ENCODE measurements at regions of chr7 and their contacts with region 1.

Region 1: DNA sequence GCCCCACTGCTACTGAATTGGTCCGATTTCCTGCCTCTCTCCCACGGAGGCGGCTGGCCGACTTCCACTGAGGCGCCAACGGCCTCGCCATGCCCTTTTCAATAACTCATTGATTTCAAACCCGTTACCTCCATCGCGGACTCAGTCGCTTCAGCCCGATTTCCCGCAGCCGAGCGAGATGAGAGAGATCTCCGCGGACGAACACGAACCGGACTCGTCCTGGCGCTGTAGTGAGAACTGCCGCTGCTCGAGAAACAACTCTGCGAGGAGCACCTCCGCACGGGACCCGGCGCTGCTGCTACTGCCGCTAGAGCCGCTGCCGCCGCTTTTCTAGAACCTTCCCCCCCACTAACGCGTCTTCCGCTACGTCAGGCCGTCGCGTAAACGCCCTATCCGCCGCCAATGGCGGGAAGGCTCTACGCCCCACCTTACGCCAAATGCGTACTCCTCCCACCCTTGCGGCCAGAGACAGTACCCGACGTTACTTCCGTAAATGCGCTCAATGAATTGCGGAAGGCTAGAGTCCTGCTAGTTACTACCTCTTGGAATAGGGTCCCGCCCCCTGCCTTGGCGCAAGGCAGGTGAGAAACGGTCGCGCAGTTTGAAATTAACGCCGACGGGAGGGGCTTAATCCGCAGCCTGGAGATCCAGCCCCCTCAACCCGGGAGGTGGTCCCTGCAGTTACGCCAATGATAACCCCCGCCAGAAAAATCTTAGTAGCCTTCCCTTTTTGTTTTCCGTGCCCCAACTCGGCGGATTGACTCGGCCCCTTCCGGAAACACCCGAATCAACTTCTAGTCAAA is at the start of gene HNRNPA2B1:
- DNase-seq: peak; percentile 97
- ATAC-seq: peak; percentile 71
- H3K4me3 Mint-ChIP-seq: peak within 1 kb of the TSS; percentile 100
- H3K27ac Mint-ChIP-seq: peak within 1 kb of the TSS; percentile 100
- H3K4me1 Mint-ChIP-seq: peaks cover 36% of the 10 kb centered on the region
- H3K27me3 Mint-ChIP-seq: no peaks in the 10 kb centered on the region
- total RNA-seq, gene HNRNPA2B1: 600 to 996 TPM

Region 2: DNA sequence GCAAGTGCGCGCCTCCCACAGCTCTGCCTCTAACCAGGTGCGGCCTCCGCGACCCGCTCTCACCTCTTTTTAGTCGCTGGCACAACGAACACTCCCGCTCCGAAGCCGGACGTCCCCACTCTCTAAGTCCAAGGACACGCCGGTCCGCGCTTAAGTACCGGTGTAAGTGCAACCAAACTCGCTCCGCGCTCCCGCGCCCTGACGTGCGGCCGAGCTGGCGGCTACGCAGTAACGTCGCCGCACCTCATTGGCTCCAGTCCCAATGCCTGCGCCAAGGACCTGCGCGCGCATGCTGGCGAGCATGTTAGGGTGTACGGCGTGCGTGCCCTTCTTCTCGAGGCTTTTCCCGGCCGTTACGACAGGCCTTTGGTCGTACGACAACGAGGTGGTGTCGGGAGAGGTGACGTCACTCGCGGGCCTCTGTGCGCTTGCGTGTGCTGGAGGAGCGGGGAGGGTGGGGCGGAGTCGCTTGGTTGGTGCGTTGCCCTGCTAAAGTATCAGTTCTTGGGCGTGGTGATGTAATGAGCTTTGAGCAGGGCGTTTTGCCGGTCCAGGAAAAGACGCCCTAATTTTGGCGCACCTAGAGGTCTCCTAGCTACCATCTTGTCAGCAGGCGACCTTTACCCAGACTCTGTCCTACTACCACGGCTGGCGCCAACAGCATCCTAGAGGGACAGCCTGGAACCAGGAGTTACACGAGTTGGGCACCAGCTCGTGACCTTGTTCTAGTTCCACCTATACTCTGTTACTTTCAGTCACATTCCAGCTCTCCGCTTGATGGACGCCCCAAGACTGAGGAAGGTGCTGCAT is 1075.3 kb before region 1 on chr7 and contains the start of gene CYCS:
- CTCF ChIA-PET with region 1: no interaction called
- POLR2A ChIA-PET with region 1: no interaction called
- intact Hi-C with region 1: loop called in 1 of 2 experiments (anchors 2 kb)
- DNase-seq: peak; percentile 100
- ATAC-seq: peak; percentile 97
- H3K4me3 Mint-ChIP-seq: peak within 1 kb of the TSS; percentile 97
- H3K27ac Mint-ChIP-seq: peak within 1 kb of the TSS; percentile 98
- H3K4me1 Mint-ChIP-seq: peaks cover 27% of the 10 kb centered on the region
- H3K27me3 Mint-ChIP-seq: no peaks in the 10 kb centered on the region
- total RNA-seq, gene CYCS: 222 to 237 TPM

Region 3: GRCh38 chr7:25557379-25557917 is 643.2 kb before region 1 on chr7:
- CTCF ChIA-PET with region 1: no interaction called
- POLR2A ChIA-PET with region 1: no interaction called
- intact Hi-C with region 1: no loop called
- DNase-seq: no peak
- ATAC-seq: no peak
- H3K4me3 Mint-ChIP-seq: no peak overlapping the region
- H3K27ac Mint-ChIP-seq: no peak overlapping the region
- H3K4me1 Mint-ChIP-seq: peaks cover 7% of the 10 kb centered on the region
- H3K27me3 Mint-ChIP-seq: peaks cover 5% of the 10 kb centered on the region

Region 4: GRCh38 chr7:25968205-25968993 is 232.2 kb before region 1 on chr7:
- CTCF ChIA-PET with region 1: no interaction called
- POLR2A ChIA-PET with region 1: interaction called, 5 read pairs
- intact Hi-C with region 1: loop called in 1 of 2 experiments (anchors 1 kb)
- DNase-seq: peak; percentile 75
- ATAC-seq: peak; percentile 86
- H3K4me3 Mint-ChIP-seq: no peak overlapping the region
- H3K27ac Mint-ChIP-seq: peak overlapping the region; percentile 35
- H3K4me1 Mint-ChIP-seq: peaks cover 18% of the 10 kb centered on the region
- H3K27me3 Mint-ChIP-seq: peaks cover 22% of the 10 kb centered on the region

Region 5: DNA sequence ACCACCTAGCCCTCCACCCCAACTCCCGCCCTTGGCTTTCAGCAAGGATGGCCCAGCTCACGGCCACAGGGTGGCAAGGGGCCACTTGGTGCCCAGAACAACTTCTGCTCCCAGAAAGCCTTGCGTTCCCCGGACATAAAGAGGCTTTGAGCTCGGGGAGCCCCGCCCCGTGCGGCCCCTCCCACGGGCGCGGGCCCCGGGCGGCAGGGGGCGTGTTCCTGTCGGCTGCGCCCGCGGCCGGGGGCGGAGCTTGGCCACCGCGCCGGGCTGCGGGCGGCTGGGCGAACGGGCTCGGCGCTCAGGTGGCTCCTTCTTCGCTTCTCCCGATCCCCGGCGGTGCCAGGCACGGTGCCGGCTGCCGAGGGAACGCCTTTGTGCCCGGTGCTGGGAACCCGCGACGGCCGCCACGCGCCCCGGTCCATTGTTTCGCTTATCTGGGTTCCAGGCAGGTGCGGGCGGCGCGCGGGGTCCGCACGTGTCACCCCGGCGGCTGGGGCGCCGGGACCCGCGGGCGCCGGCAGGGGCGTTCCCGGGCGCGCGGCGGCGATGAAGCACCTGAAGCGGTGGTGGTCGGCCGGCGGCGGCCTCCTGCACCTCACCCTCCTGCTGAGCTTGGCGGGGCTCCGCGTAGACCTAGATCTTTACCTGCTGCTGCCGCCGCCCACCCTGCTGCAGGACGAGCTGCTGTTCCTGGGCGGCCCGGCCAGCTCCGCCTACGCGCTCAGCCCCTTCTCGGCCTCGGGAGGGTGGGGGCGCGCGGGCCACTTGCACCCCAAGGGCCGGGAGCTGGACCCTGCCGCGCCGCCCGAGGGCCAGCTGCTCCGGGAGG is 48.5 kb before region 1 on chr7 and contains the start of gene NFE2L3:
- CTCF ChIA-PET with region 1: interaction called, 14 read pairs
- POLR2A ChIA-PET with region 1: interaction called, 11 read pairs
- intact Hi-C with region 1: loop called (anchors 1 kb)
- DNase-seq: peak; percentile 91
- ATAC-seq: peak; percentile 68
- H3K4me3 Mint-ChIP-seq: peak within 1 kb of the TSS; percentile 93
- H3K27ac Mint-ChIP-seq: peak within 1 kb of the TSS; percentile 97
- H3K4me1 Mint-ChIP-seq: peaks cover 52% of the 10 kb centered on the region
- H3K27me3 Mint-ChIP-seq: no peaks in the 10 kb centered on the region
- total RNA-seq, gene NFE2L3: 19.9 to 23.8 TPM

Region 6: GRCh38 chr7:26365077-26365900 is 164.6 kb after region 1 on chr7:
- CTCF ChIA-PET with region 1: interaction called, 9 read pairs
- POLR2A ChIA-PET with region 1: no interaction called
- intact Hi-C with region 1: loop called (anchors 2 to 5 kb)
- DNase-seq: peak; percentile 60
- ATAC-seq: peak; percentile 61
- H3K4me3 Mint-ChIP-seq: no peak overlapping the region
- H3K27ac Mint-ChIP-seq: no peak overlapping the region
- H3K4me1 Mint-ChIP-seq: peaks cover 8% of the 10 kb centered on the region
- H3K27me3 Mint-ChIP-seq: no peaks in the 10 kb centered on the region

Measured in activated CD4-positive, alpha-beta T cell treated with anti-CD3 and anti-CD28 coated beads for 36 hours (primary cell).